Right ventricle myocardium inferior (tissue), 1 donor: ENCODE measurements at regions of chr10 and their contacts with region 1.

Region 1: DNA sequence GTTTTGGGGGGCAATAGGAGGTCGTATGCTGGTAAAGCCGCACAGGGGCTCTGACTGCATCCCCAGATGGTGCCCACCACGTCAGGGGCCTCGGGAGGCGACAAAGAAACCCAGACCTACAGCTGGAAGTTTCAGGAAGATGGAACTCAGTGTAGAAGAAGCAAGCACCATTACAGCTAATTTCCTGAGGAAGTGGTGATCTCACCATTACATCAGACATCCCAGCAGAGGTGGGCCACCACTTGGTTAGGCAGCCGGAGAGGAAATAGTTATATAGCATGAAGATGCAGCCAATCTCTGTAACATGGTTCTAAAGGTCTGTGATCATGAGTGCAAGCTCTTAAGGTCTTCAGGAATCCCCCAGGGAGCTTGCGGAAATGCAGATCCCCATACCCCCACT is 127.3 kb upstream of the PCBD1 start:
- DNase-seq: no peak
- ATAC-seq: no peak

Region 2: GRCh38 chr10:71058308-71058707 is 42.6 kb after region 1 on chr10:
- intact Hi-C with region 1: no loop called
- DNase-seq: no peak
- ATAC-seq: no peak

Region 3: DNA sequence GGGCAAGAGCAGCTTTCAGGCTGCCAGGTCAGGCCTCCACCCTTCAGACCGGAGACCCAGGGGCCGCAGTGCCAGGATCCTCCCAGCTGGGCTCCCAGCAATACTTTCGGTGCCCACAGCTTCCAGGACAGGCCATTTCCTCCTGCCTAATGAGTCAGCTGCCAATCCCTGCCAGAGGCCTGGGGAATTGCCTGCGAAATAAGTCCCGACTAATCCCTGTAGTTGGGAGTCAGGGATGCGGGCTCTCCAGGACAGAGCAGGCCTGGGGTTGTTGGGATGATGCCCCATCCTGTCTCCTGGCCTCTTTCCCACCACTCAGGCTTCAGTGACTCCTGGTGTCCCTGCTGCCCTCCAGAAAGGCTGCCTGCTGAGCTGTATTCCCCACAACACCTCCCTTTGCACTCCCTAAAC is 53.2 kb after region 1 on chr10:
- intact Hi-C with region 1: loop called (anchors 2 kb)
- DNase-seq: no peak
- ATAC-seq: peak; percentile 75

Region 4: DNA sequence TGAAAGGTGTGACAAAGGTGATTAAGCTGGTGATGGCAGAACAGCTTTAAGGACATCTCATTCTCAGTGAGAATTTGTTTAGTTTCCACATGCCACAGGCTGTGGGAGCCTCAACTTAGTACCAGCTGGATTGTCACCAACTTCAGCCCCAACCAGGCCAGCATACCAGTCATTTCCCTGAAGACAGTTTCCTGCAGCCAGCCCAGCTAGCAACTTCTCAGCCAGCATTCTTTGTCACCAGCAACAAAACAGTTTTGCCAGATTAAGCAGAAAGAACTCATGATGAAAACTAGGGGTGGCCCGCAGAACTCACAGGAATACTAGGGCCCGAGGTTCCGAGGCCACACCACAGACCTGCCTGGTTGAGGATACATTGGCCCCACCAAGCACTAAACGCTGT is 127.9 kb after region 1 on chr10:
- intact Hi-C with region 1: loop called (anchors 5 kb)
- DNase-seq: no peak
- ATAC-seq: peak; percentile 27

Region 5: GRCh38 chr10:71197955-71198354 is 182.3 kb after region 1 on chr10:
- intact Hi-C with region 1: no loop called
- DNase-seq: no peak
- ATAC-seq: no peak